SK-N-SH (cell line): ENCODE measurements at regions of chr12 and their contacts with region 1.

Region 1: GRCh38 chr12:27383429-27384260 is 51.0 kb downstream of the BMAL2 start:
- DNase-seq: peak; percentile 68
- H3K4me3 ChIP-seq: no peak overlapping the region
- H3K27ac ChIP-seq: peak overlapping the region in 1 of 2 experiments; percentile 39; a peak in 2 of 4 replicates
- H3K4me1 ChIP-seq: peaks cover 0 to 6% of the 10 kb centered on the region in 2 experiments; a peak in 2 of 4 replicates
- H3K27me3 ChIP-seq: no peaks in the 10 kb centered on the region
- CTCF ChIP-seq: peak; percentile 91
- EP300 ChIP-seq: no peak
- RAD21 ChIP-seq: peak; percentile 64

Region 2: DNA sequence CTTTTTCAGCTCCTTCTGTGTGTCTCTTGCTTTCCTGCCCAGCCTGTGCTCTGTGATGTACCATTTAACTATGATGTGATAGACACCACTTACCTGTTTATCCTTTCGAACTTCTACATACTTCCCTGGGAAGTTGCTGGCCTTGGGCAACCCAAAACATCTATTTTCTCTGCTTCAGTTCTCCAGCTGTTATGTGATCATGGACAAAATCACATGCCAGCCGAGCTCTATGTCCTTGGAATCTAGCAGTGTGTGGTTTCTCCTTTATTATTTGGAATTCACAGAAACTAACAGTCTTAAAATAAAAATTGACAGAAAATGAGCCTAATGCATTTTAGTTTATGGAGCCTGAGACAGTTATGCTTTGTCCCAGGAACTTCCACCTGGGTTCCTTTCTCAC is 28.2 kb before region 1 on chr12:
- CTCF ChIA-PET with region 1: no interaction called
- POLR2A ChIA-PET with region 1: no interaction called
- DNase-seq: no peak
- H3K4me3 ChIP-seq: no peak overlapping the region
- H3K27ac ChIP-seq: no peak overlapping the region
- H3K4me1 ChIP-seq: no peaks in the 10 kb centered on the region
- H3K27me3 ChIP-seq: no peaks in the 10 kb centered on the region
- CTCF ChIP-seq: no peak
- EP300 ChIP-seq: no peak
- RAD21 ChIP-seq: no peak

Region 3: GRCh38 chr12:27367078-27367477 is 16.6 kb before region 1 on chr12:
- CTCF ChIA-PET with region 1: interaction called, 13 read pairs
- POLR2A ChIA-PET with region 1: no interaction called
- DNase-seq: no peak
- H3K4me3 ChIP-seq: no peak overlapping the region
- H3K27ac ChIP-seq: peak overlapping the region in 1 of 2 experiments; percentile 22; a peak in 1 of 4 replicates
- H3K4me1 ChIP-seq: no peaks in the 10 kb centered on the region; a peak in 1 of 4 replicates
- H3K27me3 ChIP-seq: no peaks in the 10 kb centered on the region
- CTCF ChIP-seq: no peak
- EP300 ChIP-seq: no peak
- RAD21 ChIP-seq: no peak

Region 4: GRCh38 chr12:27394676-27395075 is 11.0 kb after region 1 on chr12:
- CTCF ChIA-PET with region 1: interaction called, 15 read pairs
- POLR2A ChIA-PET with region 1: no interaction called
- DNase-seq: no peak
- H3K4me3 ChIP-seq: no peak overlapping the region
- H3K27ac ChIP-seq: no peak overlapping the region
- H3K4me1 ChIP-seq: peaks cover 0 to 3% of the 10 kb centered on the region in 2 experiments; a peak in 2 of 4 replicates
- H3K27me3 ChIP-seq: no peaks in the 10 kb centered on the region
- CTCF ChIP-seq: no peak
- EP300 ChIP-seq: no peak
- RAD21 ChIP-seq: no peak